ENCODE measurements at regions of chr1 and their contacts with region 1.

Region 1: DNA sequence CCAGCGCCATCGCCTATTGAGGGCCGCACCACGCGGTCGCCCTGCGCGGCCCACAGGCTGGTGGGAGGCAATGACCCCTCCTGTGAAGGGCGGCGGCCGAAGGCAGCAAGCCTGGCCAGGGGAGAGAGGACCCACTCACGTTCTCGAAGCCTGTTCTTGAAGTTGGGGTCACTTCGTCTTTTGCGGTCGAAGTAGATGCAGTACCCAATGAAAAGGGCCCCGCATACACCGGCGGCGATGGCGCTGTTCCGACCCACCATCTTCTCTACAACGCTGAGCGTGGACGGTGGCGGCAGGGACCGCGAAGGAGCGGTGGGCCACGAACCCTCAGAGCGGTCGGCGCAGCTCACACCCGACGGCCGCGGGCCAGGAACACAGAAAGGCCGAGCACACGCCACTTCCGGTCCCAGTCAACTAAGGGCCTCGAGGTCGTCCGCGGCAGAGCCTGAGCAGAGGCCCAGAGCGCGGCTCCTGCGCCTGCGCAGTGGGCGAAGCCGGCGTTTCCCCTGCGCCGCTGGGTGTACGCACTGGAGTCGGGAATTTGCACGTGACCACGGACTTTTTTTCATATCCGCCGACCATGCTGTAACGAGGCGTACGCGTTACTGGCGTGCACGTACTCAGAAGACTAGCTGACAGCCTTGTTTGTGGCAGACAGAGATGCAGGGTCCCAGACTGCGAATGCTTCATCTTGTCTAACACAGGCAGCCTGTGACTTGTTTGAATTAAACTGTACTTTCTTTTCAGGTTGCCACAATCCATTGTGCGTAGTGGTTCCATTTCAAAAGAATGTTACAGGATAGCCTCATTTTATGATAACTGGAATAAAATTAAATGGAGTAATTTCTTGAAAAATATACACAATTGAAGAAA is at the start of gene TOMM20:
- DNase-seq: peak; percentile 92 to 99 (median 95)

Region 2: GRCh38 chr1:234373064-234373958 is 755.4 kb before region 1 on chr1 and contains the start of gene COA6:
- intact Hi-C with region 1: loop called (anchors 2 kb)
- DNase-seq: peak; percentile 81 to 98 (median 88)

Region 3: DNA sequence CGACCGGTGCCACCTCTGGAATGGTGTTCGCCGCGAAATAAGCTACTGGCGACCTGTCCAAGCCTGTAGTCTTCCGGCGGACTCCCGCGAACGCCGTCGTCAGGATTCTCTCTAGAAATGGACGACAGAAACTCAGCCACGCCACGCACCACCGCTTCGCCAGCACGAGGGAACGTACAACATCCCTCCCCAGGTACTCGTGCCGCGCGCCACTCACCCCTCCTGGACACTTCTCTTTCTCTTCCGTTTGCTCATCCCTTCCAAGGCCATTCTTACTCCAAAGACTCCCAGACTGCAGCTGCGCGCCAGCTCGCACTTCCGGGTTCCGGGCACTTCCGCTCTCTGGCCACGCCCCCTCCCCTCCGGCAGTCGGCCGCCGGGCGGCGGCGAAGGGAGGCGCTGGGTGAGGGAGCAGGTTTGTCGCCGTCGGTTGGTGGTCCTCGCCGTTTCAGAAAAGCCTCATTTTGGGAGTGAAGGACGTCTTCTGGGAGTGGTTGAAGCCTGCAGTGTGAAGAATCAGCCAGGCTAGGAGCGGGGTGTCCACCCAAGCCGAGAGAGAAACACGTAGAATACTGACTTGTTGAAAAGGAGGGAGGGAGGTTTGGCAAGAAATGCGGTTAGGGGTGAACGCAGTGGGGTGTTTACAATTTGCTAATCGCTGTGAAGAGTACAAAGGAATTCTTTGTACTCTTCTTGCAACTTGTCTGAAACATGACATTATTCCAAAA is 32.4 kb after region 1 on chr1 and contains the start of gene RBM34:
- intact Hi-C with region 1: loop called (anchors 5 kb)
- DNase-seq: peak; percentile 85 to 99 (median 91)

Measured in posterior cingulate gyrus (tissue), 11 donors.